Activated naive CD4-positive, alpha-beta T cell treated with anti-CD3 and anti-CD28 coated beads for 36 hours (primary cell): ENCODE measurements at regions of chr18 and their contacts with region 1.

Region 1: DNA sequence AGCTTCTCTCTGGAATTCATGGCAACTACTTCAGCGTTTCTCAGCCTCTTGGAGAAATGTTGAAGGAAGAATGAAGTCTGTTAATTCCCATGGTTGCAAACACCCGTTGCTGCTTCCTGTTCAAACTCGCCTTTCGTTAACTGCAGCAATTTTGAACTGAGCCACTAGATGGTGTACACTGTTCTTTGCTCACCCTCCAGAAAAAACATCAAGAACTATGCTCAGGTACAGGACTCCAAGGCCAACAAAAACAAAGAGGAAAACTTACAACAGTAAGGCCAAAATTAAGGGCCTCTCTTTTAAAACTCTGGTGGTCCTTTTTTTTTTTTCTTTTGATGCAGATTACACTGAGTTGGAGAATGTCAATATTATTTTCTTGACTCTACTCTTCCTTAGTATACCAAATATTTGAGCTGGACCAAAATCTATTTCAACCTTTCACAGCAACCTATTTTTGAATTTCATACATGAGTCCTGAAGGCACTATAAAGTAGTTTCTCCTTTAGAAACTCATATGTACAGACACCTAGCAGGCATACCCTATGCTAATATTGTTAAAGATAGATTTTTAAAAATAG is 58.2 kb downstream of the KLHL14 start:
- DNase-seq: peak; percentile 44
- H3K4me3 Mint-ChIP-seq: no peak overlapping the region
- H3K27ac Mint-ChIP-seq: no peak overlapping the region
- H3K4me1 Mint-ChIP-seq: peaks cover 1% of the 10 kb centered on the region
- H3K27me3 Mint-ChIP-seq: no peaks in the 10 kb centered on the region

Region 2: DNA sequence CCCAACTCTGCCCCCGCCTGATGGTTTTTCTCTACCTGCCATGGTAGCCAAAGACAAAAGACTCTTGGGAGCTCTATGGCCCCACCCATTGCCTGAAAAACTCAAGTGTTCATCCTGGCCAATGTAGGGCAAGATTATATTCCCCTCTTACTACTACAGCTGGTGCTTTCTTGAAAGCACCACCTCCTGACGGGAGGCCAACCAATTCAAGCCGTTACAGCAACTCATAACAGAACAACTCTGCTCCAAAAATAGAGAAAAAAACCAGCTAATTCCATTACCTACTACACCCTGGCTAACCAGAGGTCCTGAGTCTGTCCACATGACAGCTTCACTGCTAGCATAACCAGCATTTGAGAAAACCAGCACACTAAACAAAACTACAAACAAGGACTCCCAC is 116.5 kb before region 1 on chr18:
- CTCF ChIA-PET with region 1: no interaction called
- intact Hi-C with region 1: no loop called
- DNase-seq: no peak
- H3K4me3 Mint-ChIP-seq: no peak overlapping the region
- H3K27ac Mint-ChIP-seq: no peak overlapping the region
- H3K4me1 Mint-ChIP-seq: no peaks in the 10 kb centered on the region
- H3K27me3 Mint-ChIP-seq: peaks cover 4% of the 10 kb centered on the region

Region 3: DNA sequence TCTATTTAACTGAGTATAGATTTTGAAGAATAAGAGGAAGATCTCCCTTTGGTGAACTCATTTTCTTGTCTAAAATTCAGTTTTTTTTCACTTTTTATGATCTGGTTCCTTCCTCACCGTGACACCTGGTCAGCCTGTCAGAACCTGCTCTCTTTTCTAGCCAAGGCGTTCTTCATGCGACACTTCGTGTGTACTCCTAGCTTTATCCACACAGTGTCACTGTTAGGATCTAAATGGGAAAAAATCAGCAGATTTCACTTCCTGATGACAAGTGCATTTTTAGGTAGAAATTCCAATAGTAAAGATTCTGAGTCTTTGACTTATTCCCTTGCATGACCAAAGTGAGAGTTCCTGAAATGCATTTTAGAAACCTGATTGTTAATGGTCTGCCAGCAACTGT is 31.6 kb before region 1 on chr18:
- CTCF ChIA-PET with region 1: no interaction called
- intact Hi-C with region 1: no loop called
- DNase-seq: no peak
- H3K4me3 Mint-ChIP-seq: no peak overlapping the region
- H3K27ac Mint-ChIP-seq: no peak overlapping the region
- H3K4me1 Mint-ChIP-seq: no peaks in the 10 kb centered on the region
- H3K27me3 Mint-ChIP-seq: no peaks in the 10 kb centered on the region

Region 4: DNA sequence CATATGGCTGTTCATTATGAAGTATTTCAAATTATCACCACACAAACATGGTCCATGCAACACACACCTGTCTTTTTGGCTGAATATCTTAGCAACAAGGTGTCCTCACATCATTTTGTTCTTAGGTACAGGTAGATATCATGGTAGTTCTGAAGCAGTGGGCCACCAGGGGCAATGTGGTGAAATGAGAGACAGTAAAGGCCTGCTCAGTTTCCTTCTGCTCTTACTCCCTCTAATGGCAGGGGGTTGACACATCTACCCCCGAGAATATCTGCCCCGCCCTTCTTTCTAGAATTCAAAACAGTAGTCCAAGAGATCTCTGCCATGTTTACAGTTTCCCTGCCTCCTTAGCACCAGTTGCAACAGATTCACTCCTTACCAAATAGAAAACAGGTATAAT is 205.1 kb after region 1 on chr18:
- CTCF ChIA-PET with region 1: no interaction called
- intact Hi-C with region 1: loop called (anchors 1 kb)
- DNase-seq: no peak
- H3K4me3 Mint-ChIP-seq: no peak overlapping the region
- H3K27ac Mint-ChIP-seq: no peak overlapping the region
- H3K4me1 Mint-ChIP-seq: no peaks in the 10 kb centered on the region
- H3K27me3 Mint-ChIP-seq: peaks cover 1% of the 10 kb centered on the region

Region 5: GRCh38 chr18:32930695-32931301 is 216.1 kb after region 1 on chr18:
- CTCF ChIA-PET with region 1: interaction called, 3 read pairs
- intact Hi-C with region 1: loop called (anchors 1 kb)
- DNase-seq: no peak
- H3K4me3 Mint-ChIP-seq: no peak overlapping the region
- H3K27ac Mint-ChIP-seq: no peak overlapping the region
- H3K4me1 Mint-ChIP-seq: no peaks in the 10 kb centered on the region
- H3K27me3 Mint-ChIP-seq: no peaks in the 10 kb centered on the region